Activated T-helper 1 cell treated with anti-CD3 and anti-CD28 coated beads, Interleukin-12 subunit alpha, Interleukin-12 subunit beta, Interleukin-2, Interleukin-4 antibody, amounts not matched to agents 30 ng/mL and 10 ng/mL and 1 ng/mL, durations not matched to agents 14 hours and 24 hours and 36 hours (primary cell): ENCODE measurements at regions of chr20 and their contacts with region 1.

Region 1: DNA sequence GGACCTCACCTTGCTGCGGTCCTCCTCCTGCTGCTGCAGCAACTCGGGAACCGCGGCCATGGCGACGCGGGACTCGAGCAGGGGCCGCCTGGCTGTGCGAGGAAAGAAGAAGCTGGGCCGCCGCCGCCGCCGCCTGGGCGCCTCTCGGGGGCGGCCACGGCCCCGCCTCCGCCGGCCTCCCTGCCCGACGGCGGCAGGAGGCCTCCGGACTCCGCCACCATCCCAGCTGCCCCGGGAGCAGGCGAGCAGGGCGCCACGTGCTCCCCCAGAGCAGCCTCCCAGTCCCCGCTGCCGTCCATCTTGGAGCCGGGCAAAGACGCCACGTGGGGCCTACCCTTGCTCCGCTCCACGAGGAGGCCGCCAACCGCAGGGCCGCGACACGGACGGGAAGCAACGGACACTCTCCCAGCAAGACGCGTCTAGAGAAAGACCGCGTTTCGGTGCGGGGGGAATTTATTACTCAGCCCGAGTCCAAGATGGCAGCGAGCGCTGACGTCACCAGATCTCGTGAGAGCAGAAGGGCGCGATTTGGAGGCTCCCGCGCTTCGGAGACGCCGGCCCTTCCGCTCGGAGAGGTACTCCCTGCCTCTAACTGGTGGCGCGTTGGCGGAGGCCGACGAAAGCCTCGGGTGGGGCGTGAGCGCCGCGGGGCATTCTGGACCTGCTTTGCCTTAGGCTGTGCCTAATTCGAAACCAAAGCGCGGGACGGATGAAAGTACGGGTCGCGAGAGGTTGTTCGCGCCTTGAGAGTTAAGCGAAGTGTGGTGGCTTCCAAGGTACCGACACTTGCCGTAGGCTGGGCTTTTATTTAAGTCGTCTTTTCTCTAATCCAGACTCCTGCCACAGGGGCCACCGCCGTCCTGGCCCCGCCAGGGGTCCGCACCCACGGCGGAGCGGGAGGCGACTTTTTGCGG is at the starts of genes MGME1 and SNX5:
- DNase-seq: peak; percentile 100
- H3K4me3 Mint-ChIP-seq: peak within 1 kb of the TSS; percentile 99
- H3K27ac Mint-ChIP-seq: peak within 1 kb of the TSS; percentile 98
- H3K4me1 Mint-ChIP-seq: peaks cover 62% of the 10 kb centered on the region
- H3K27me3 Mint-ChIP-seq: no peaks in the 10 kb centered on the region
- total RNA-seq, gene MGME1: 32.1 and 33.6 TPM in 2 replicates
- total RNA-seq, gene SNX5: 238 and 248 TPM in 2 replicates

Region 2: DNA sequence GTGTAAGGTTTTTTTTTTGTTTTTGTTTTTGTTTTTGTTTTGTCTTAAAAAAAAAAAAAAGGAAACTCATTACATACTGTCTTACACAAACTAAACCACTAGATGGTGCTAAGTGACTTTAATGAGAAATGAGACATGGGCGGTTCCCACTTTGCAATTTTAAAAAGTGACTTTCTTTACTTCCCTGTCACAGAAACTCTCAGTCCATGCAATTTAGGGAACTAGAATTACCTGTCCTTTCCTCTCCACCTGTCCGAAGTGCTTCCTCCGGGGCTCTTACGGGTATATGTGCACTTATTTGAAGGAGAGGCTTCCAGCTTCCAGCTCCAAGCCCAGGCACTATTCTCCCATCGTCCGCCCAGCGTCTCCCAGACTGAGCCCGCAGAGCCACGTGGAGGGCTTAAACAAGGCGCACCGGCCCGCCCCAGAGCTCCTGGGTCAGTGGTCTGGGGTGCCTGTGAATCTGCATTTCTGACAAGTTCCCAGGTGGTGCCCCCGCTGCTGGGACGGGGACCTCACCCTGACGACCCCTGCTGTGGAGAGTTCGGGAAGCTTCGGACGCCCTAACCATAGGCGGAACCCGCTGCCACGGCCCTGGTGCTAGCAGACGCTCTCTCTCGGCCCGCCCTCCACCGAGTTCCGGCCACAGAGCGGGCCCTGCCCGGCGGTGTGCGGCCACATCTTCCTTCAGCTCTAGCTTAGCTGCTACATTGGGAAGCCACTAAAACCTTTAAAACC is 463.6 kb before region 1 on chr20:
- intact Hi-C with region 1: loop called (anchors 2 kb)
- DNase-seq: peak; percentile 71
- H3K4me3 Mint-ChIP-seq: peak overlapping the region; percentile 81
- H3K27ac Mint-ChIP-seq: peak overlapping the region; percentile 86
- H3K4me1 Mint-ChIP-seq: peaks cover 71% of the 10 kb centered on the region
- H3K27me3 Mint-ChIP-seq: peaks cover 4% of the 10 kb centered on the region

Region 3: GRCh38 chr20:17569616-17570346 is 398.8 kb before region 1 on chr20 and contains the start of gene DSTN:
- intact Hi-C with region 1: loop called (anchors 2 kb)
- DNase-seq: peak; percentile 86
- H3K4me3 Mint-ChIP-seq: peak within 1 kb of the TSS; percentile 94
- H3K27ac Mint-ChIP-seq: peak within 1 kb of the TSS; percentile 93
- H3K4me1 Mint-ChIP-seq: peaks cover 19% of the 10 kb centered on the region
- H3K27me3 Mint-ChIP-seq: peaks cover 6% of the 10 kb centered on the region
- total RNA-seq, gene DSTN: 58.2 and 58.8 TPM in 2 replicates

Region 4: GRCh38 chr20:17925141-17925939 is 43.3 kb before region 1 on chr20:
- intact Hi-C with region 1: no loop called
- DNase-seq: no peak
- H3K4me3 Mint-ChIP-seq: no peak overlapping the region
- H3K27ac Mint-ChIP-seq: no peak overlapping the region
- H3K4me1 Mint-ChIP-seq: no peaks in the 10 kb centered on the region
- H3K27me3 Mint-ChIP-seq: peaks cover 13% of the 10 kb centered on the region

Region 5: DNA sequence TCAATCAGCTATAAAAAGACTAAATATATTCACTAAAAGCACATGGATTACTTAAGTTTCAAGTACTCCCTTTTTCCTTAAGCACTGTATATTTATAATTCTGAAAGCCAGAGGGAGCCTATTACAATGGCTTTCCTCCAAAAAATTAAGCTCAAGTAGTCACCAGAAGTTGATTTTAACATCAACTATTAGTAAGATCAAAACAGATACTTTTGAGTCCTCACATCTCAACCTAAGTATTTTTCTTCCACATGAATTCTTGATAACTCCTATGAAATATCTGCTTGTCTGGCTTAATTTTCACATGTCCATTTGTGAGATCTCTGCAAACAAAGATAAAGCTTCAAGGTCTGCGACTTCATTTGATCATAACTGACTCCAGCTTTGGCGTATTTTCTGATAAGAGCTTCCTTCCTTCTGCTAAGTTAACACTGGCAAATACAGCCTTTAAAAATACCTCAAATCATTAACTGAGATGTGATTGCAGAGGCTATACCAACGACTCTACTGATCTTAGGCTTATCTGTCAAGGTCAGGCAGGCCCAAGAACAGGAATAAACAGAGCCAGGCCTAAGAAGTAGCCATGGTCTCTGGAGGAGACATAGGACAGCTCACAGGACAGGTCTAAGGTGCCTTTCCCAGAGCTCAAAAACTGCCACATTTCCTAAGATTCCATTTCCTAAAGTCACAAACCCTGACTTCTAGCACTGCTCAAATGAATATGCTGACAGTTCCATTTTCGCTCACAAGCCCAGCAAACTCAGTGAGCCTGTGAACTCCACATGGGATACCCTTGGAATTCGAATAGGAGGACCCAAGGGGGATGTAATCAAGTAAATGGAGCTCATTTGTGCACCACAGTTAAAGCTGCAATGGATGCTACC is 10.0 kb before region 1 on chr20:
- intact Hi-C with region 1: loop called (anchors 1 kb)
- DNase-seq: no peak
- H3K4me3 Mint-ChIP-seq: peak overlapping the region; percentile 13
- H3K27ac Mint-ChIP-seq: peak overlapping the region; percentile 1
- H3K4me1 Mint-ChIP-seq: peaks cover 82% of the 10 kb centered on the region
- H3K27me3 Mint-ChIP-seq: no peaks in the 10 kb centered on the region

Region 6: DNA sequence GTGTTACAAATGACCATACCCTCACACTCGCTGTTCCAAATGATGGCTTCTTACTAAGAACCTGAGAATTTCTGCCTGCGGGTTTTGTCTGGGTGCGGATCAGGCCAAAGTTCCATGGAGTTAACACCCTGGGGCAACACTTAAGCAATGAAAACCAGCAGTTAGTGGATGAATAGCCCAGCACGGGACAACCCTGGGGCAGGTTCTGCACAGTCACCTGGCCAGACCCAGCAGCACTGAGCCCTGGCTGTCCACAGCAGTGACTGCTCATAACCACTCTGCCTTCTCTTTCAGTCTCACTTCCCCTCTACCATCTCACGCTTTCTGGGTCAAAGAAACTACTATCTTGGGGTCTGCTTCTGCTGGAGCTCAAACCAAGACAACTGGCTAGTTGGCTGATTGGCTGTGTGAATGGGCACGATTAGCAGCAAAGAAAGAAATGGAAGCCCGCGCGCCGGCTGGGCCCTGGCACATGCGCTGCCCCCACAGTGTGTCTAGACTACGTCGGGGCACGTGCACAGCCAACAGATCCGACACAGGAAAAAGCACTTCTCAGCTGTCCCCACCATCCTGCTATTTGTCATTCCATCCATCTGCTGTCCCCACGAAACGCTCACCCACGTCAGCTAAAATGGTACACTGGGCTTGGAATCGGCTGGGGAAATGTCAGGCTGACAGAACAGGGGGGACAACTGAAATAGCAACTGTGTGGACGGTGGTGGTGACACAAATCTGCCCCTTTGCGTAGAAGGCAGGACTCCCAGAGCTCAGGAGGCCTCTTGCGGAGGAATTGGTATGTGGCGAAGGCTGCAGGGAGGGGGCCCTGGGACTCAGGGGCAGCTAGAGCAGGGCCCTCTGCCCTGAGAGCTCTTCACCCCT is 36.8 kb after region 1 on chr20:
- intact Hi-C with region 1: no loop called
- DNase-seq: no peak
- H3K4me3 Mint-ChIP-seq: no peak overlapping the region
- H3K27ac Mint-ChIP-seq: no peak overlapping the region
- H3K4me1 Mint-ChIP-seq: no peaks in the 10 kb centered on the region
- H3K27me3 Mint-ChIP-seq: peaks cover 1% of the 10 kb centered on the region

Region 7: GRCh38 chr20:18466894-18467730 is 498.5 kb after region 1 on chr20 and contains the starts of genes DZANK1 and POLR3F:
- intact Hi-C with region 1: loop called (anchors 1 kb)
- DNase-seq: peak; percentile 90
- H3K4me3 Mint-ChIP-seq: peak within 1 kb of the TSS; percentile 99
- H3K27ac Mint-ChIP-seq: peak within 1 kb of the TSS; percentile 92
- H3K4me1 Mint-ChIP-seq: peaks cover 31% of the 10 kb centered on the region
- H3K27me3 Mint-ChIP-seq: no peaks in the 10 kb centered on the region
- total RNA-seq, gene DZANK1: 1.1 and 1.8 TPM in 2 replicates
- total RNA-seq, gene POLR3F: 13.4 and 16.6 TPM in 2 replicates